GM12878 (cell line): ENCODE measurements at regions of chr18 and their contacts with region 1.

Region 1: GRCh38 chr18:63907664-63908063 is at the start of gene SERPINB10:
- DNase-seq: no peak
- ATAC-seq: peak; percentile 57
- H3K4me3 ChIP-seq: 0 out of 2 replicates have a peak within 1 kb of the TSS, but pooled peaks have one; percentile 4
- H3K27ac ChIP-seq: peak within 1 kb of the TSS; percentile 63; the same call in 1 of the 2 replicates
- H3K4me1 ChIP-seq: peaks cover 4% of the 10 kb centered on the region; the same call in 1 of the 2 replicates
- H3K27me3 ChIP-seq: no peaks in the 10 kb centered on the region
- CTCF ChIP-seq: no peak
- EP300 ChIP-seq: no peak
- POLR2A ChIP-seq: no peak
- RAD21 ChIP-seq: no peak
- polyA plus RNA-seq, gene SERPINB10: 20.7 to 23.1 TPM

Region 2: GRCh38 chr18:63730773-63731172 is 176.9 kb before region 1 on chr18:
- CTCF ChIA-PET with region 1: no interaction called
- POLR2A ChIA-PET with region 1: no interaction called
- RAD21 ChIA-PET with region 1: no interaction called
- SMC1A ChIA-PET with region 1: no interaction called
- in situ Hi-C with region 1: no loop called
- intact Hi-C with region 1: no loop called
- DNase-seq: no peak
- ATAC-seq: no peak
- H3K4me3 ChIP-seq: no peak overlapping the region
- H3K27ac ChIP-seq: no peak overlapping the region
- H3K4me1 ChIP-seq: no peaks in the 10 kb centered on the region
- H3K27me3 ChIP-seq: no peaks in the 10 kb centered on the region; a peak in 1 of 4 replicates
- CTCF ChIP-seq: no peak
- EP300 ChIP-seq: no peak
- POLR2A ChIP-seq: no peak
- RAD21 ChIP-seq: no peak

Region 3: DNA sequence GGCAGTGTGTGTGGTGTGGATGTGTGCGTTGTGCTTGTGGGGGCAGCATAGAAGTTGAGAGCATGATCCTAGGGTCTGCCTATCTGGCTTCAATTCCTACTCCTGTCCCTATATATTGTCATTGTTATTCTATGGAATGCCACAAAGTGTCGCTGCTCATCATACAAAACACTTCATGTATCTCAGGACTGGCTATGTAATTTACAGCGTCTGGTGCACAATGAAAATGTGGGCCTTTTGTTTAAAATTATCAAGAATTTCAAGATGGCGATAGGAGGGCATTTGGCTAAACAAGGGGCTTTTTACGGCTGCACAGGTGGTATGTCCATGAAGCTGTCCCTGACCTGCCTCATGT is 16.7 kb before region 1 on chr18:
- CTCF ChIA-PET with region 1: interaction called, 10 read pairs
- POLR2A ChIA-PET with region 1: interaction called, 3 read pairs
- RAD21 ChIA-PET with region 1: interaction called, 13 read pairs
- SMC1A ChIA-PET with region 1: interaction called, 35 read pairs
- in situ Hi-C with region 1: no loop called
- intact Hi-C with region 1: no loop called
- DNase-seq: no peak
- ATAC-seq: peak; percentile 80
- H3K4me3 ChIP-seq: no peak overlapping the region
- H3K27ac ChIP-seq: no peak overlapping the region
- H3K4me1 ChIP-seq: no peaks in the 10 kb centered on the region
- H3K27me3 ChIP-seq: no peaks in the 10 kb centered on the region
- CTCF ChIP-seq: peak; percentile 39 to 74 (median 50); a peak in 4 of 6 replicates
- EP300 ChIP-seq: no peak
- POLR2A ChIP-seq: no peak
- RAD21 ChIP-seq: peak; percentile 95

Region 4: GRCh38 chr18:63897072-63897471 is 10.6 kb before region 1 on chr18:
- CTCF ChIA-PET with region 1: interaction called, 10 read pairs
- POLR2A ChIA-PET with region 1: interaction called, 3 read pairs
- RAD21 ChIA-PET with region 1: interaction called, 9 read pairs
- SMC1A ChIA-PET with region 1: interaction called, 35 read pairs
- in situ Hi-C with region 1: no loop called
- intact Hi-C with region 1: no loop called
- DNase-seq: no peak
- ATAC-seq: no peak
- H3K4me3 ChIP-seq: no peak overlapping the region
- H3K27ac ChIP-seq: no peak overlapping the region
- H3K4me1 ChIP-seq: no peaks in the 10 kb centered on the region; the same call in 1 of the 2 replicates
- H3K27me3 ChIP-seq: no peaks in the 10 kb centered on the region
- CTCF ChIP-seq: no peak
- EP300 ChIP-seq: no peak
- POLR2A ChIP-seq: no peak
- RAD21 ChIP-seq: no peak

Region 5: DNA sequence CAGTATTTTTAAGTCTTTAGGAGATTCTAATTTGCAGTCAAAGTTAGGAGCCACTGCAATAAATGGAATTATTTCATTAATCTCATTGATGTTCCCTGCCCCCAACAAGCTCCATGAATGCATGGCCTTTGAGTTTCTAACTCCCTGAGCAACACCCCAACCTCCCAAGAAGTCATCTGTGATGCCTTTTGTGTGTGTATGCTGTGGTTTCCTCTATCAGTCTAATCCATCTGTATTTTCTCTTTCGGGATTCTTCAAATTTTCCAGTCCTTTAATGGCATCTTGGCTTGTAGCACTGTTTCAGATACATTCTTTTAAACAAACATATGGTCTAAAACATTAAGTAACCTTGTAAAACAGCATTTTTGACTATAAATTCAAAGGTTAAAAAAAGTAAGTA is 16.9 kb after region 1 on chr18:
- CTCF ChIA-PET with region 1: interaction called, 5 read pairs
- POLR2A ChIA-PET with region 1: interaction called, 7 read pairs
- RAD21 ChIA-PET with region 1: interaction called, 9 read pairs
- SMC1A ChIA-PET with region 1: interaction called, 25 read pairs
- in situ Hi-C with region 1: no loop called
- intact Hi-C with region 1: no loop called
- DNase-seq: no peak
- ATAC-seq: no peak
- H3K4me3 ChIP-seq: no peak overlapping the region
- H3K27ac ChIP-seq: no peak overlapping the region
- H3K4me1 ChIP-seq: no peaks in the 10 kb centered on the region
- H3K27me3 ChIP-seq: no peaks in the 10 kb centered on the region
- CTCF ChIP-seq: no peak
- EP300 ChIP-seq: no peak
- POLR2A ChIP-seq: no peak
- RAD21 ChIP-seq: no peak

Region 6: GRCh38 chr18:63949068-63949737 is 41.5 kb after region 1 on chr18 and contains the start of gene HMSD:
- CTCF ChIA-PET with region 1: interaction called, 5 read pairs
- POLR2A ChIA-PET with region 1: interaction called, 5 read pairs
- RAD21 ChIA-PET with region 1: interaction called, 5 read pairs
- SMC1A ChIA-PET with region 1: interaction called, 11 read pairs
- in situ Hi-C with region 1: no loop called
- intact Hi-C with region 1: no loop called
- DNase-seq: peak; percentile 57
- ATAC-seq: peak; percentile 93
- H3K4me3 ChIP-seq: peak within 1 kb of the TSS; percentile 89
- H3K27ac ChIP-seq: peak within 1 kb of the TSS; percentile 97
- H3K4me1 ChIP-seq: peaks cover 9% of the 10 kb centered on the region
- H3K27me3 ChIP-seq: no peaks in the 10 kb centered on the region
- CTCF ChIP-seq: peak; percentile 49 to 60 (median 54)
- EP300 ChIP-seq: no peak; a peak in 1 of 4 replicates
- POLR2A ChIP-seq: peak; percentile 76
- RAD21 ChIP-seq: no peak
- polyA plus RNA-seq, gene HMSD: 31.5 to 33.4 TPM